ENCODE measurements at regions of chr1 and their contacts with region 1.

Region 1: DNA sequence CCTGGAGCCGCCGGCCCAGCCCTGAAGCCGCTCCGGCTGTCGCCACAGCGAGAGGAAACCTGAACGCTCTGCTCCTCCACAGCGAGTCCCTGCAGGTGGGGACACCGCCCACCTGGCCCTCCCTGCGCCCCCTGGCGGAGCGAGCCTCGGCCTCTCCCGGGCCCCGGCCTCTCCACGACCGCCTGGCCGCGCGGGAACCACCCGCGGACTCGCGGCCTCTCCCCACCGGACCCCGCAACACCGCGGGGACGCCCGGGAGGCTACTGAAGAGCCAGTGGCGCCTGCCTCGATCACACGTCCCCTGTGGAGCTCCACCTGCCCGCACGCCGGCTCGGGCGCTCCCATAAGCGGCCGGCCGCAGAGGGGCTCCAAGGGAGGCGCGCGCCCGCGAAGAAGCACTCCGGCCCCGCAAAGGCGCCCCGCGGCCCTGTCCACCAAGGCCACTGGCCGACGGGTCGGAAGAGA is 109.6 kb downstream of the KCNN3 start:
- DNase-seq: peak; percentile 68 to 90 (median 84)
- ATAC-seq: peak; percentile 93 to 98
- H3K4me3 Mint-ChIP-seq: peak overlapping the region; percentile 55 to 76 (median 65)
- H3K27ac Mint-ChIP-seq: peak overlapping the region in 5 of 10 donors; percentile 25 to 61 (median 59)
- H3K4me1 Mint-ChIP-seq: peaks cover 20 to 35% (median 28%) of the 10 kb centered on the region in 4 donors
- H3K27me3 Mint-ChIP-seq: peaks cover 0 to 27% (median 0%) of the 10 kb centered on the region in 5 donors

Region 2: DNA sequence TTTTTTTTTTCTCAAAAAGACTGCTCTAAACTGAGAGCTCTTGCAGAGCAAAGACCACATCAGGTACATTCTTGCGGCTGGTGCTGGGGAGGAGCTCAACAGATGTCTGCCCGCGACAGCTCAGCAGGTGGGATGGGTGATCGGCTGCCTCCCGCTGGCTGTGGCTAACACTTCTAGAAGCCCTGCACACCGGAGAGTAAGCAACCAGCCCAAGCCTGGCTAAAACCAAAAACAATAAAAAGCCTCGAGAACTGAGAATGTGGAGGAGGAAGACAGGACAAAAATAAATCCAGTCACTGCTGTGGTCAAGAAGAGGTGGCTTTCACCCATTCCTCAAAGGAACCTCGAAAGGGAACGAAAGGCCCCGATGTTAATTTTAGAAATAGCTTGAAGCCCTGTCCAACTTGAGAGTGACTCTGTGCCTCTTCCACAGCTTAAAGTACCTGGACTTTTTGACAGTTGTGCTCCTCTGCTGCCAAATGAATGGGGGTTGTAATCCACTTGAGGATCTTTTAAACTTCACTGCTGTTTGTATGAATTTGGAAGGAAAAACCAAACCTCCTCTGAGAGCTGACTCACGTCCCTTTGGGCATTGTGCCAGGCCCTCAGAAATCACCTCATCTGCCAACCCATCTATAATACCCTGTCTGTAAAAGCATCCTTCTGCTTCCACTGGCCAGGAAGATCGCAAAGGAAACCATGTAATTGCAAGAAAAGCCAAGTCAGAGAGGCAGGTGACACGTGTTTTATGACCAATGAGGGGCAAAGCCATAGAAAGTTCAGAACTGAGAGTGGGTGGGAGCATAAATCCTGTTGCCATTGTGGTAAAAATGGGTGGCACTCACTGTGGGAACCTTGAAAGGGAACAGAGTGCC is 31.0 kb after region 1 on chr1:
- POLR2A ChIA-PET with region 1: interaction called, 14 read pairs
- DNase-seq: peak; percentile 69 to 96 (median 88)
- ATAC-seq: peak; percentile 97 to 100
- H3K4me3 Mint-ChIP-seq: peak overlapping the region; percentile 60 to 88 (median 74)
- H3K27ac Mint-ChIP-seq: peak overlapping the region; percentile 41 to 96 (median 92)
- H3K4me1 Mint-ChIP-seq: peaks cover 16 to 55% (median 38%) of the 10 kb centered on the region in 4 donors
- H3K27me3 Mint-ChIP-seq: peaks cover 0 to 2% (median 0%) of the 10 kb centered on the region in 5 donors

Measured in naive thymus-derived CD8-positive, alpha-beta T cell (primary cell).